Heart right ventricle (tissue), 16 donors: ENCODE measurements at regions of chr3 and their contacts with region 1.

Region 1: GRCh38 chr3:76570436-76571057 is 469.4 kb upstream of the ROBO2 start:
- DNase-seq: no peak
- ATAC-seq: no peak
- H3K4me3 ChIP-seq: no peak overlapping the region
- H3K27ac ChIP-seq: no peak overlapping the region
- H3K4me1 ChIP-seq: no peaks in the 10 kb centered on the region
- H3K27me3 ChIP-seq: no peaks in the 10 kb centered on the region
- CTCF ChIP-seq: peak in 8 of 9 donors; percentile 14 to 67 (median 60)

Region 2: GRCh38 chr3:76369178-76369577 is 201.4 kb before region 1 on chr3:
- intact Hi-C with region 1: loop called in 3 of 10 experiments (anchors 10 kb)
- DNase-seq: no peak
- ATAC-seq: peak in 3 of 8 donors; percentile 29 to 49 (median 48)
- H3K4me3 ChIP-seq: no peak overlapping the region
- H3K27ac ChIP-seq: no peak overlapping the region
- H3K4me1 ChIP-seq: no peaks in the 10 kb centered on the region
- H3K27me3 ChIP-seq: no peaks in the 10 kb centered on the region
- CTCF ChIP-seq: peak in 7 of 9 donors; percentile 8 to 41 (median 31)

Region 3: GRCh38 chr3:76532158-76532822 is 38.3 kb before region 1 on chr3:
- intact Hi-C with region 1: loop called in 1 of 10 experiments (anchors 1 kb)
- DNase-seq: no peak
- ATAC-seq: no peak
- H3K4me3 ChIP-seq: no peak overlapping the region
- H3K27ac ChIP-seq: no peak overlapping the region
- H3K4me1 ChIP-seq: no peaks in the 10 kb centered on the region
- H3K27me3 ChIP-seq: no peaks in the 10 kb centered on the region
- CTCF ChIP-seq: no peak